ENCODE measurements at regions of chr17 and their contacts with region 1.

Region 1: GRCh38 chr17:76506408-76507349 is 5.5 kb upstream of the RHBDF2 start:
- DNase-seq: peak; percentile 71
- H3K4me3 ChIP-seq: no peak overlapping the region
- H3K27ac ChIP-seq: no peak overlapping the region
- H3K4me1 ChIP-seq: no peaks in the 10 kb centered on the region
- H3K27me3 ChIP-seq: peaks cover 0 to 4% of the 10 kb centered on the region in 2 experiments
- CTCF ChIP-seq: peak; percentile 87 to 95
- POLR2A ChIP-seq: no peak

Region 2: GRCh38 chr17:76296186-76296585 is 210.5 kb before region 1 on chr17:
- CTCF ChIA-PET with region 1: no interaction called
- POLR2A ChIA-PET with region 1: no interaction called
- dilution Hi-C with region 1: no loop called
- intact Hi-C with region 1: no loop called
- DNase-seq: no peak
- H3K4me3 ChIP-seq: no peak overlapping the region
- H3K27ac ChIP-seq: no peak overlapping the region
- H3K4me1 ChIP-seq: peaks cover 4% of the 10 kb centered on the region
- H3K27me3 ChIP-seq: no peaks in the 10 kb centered on the region
- CTCF ChIP-seq: no peak
- POLR2A ChIP-seq: no peak

Region 3: DNA sequence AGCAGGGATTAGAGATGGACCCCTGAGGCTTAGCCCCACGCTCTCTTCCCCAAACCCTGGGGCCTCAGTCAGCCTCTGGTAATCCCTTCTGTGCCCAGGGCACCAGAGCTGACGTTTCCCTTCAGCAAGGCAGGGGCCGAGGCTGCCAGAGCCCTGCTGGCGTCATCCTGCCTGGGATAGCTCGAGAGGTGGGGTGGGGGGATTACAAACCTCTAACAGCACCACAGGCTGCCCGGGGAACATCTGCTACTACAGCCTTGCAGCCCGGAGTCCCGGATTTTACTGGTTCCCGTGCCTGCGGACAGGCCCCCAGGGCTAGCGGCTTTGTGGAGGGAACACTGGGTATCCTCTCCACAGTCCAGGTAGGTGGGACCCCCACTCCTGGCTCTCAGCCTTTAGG is 39.3 kb before region 1 on chr17 and contains the start of gene AANAT:
- CTCF ChIA-PET with region 1: interaction called, 110 read pairs
- POLR2A ChIA-PET with region 1: interaction called, 6 read pairs
- dilution Hi-C with region 1: no loop called
- intact Hi-C with region 1: loop called (anchors 1 kb)
- DNase-seq: no peak
- H3K4me3 ChIP-seq: no peak within 1 kb of the TSS
- H3K27ac ChIP-seq: no peak within 1 kb of the TSS
- H3K4me1 ChIP-seq: no peaks in the 10 kb centered on the region
- H3K27me3 ChIP-seq: no peaks in the 10 kb centered on the region
- CTCF ChIP-seq: no peak
- POLR2A ChIP-seq: no peak
- total RNA-seq, gene AANAT: not detected in 2 replicates

Region 4: DNA sequence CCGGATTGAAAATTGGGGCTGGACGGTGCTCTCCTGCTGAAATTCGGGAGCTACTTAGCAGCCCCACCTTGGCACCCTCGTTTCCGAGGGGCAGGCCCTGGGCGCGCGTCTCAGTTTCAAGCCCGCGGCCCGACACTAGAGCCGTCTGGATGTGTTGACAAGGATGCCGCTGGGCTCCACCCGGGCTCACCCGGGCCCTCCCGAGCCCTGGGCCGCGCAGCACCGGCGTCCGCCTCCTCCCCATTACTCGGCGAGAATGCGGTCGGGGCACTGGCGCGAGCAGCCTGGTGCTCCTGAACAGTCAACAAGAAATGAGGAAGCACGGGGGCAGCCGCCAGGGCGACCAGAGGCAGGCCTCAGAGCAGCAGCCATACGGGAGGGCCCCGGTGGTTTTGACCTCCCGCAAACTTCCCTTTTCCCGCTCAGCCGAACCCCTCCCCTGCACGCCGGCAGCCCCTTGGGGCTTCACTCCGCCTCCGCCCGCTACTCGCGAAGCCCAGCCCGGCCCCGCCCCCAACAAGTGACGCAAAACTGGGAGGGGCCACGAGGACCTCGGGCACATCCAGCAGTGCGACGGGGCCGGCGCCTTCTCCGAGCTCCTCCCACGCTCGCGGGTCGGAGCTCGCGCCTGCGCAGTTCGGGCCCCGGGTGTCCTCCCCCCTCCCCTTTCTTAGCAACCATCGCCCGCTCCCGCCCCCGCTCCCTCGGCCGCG is 633.6 kb after region 1 on chr17:
- CTCF ChIA-PET with region 1: no interaction called
- POLR2A ChIA-PET with region 1: no interaction called
- dilution Hi-C with region 1: no loop called
- intact Hi-C with region 1: no loop called
- DNase-seq: peak; percentile 99
- H3K4me3 ChIP-seq: peak overlapping the region in 2 of 3 experiments; percentile 12 to 19
- H3K27ac ChIP-seq: peak overlapping the region; percentile 94
- H3K4me1 ChIP-seq: peaks cover 46% of the 10 kb centered on the region
- H3K27me3 ChIP-seq: no peaks in the 10 kb centered on the region
- CTCF ChIP-seq: peak in 1 of 2 donors; percentile 8
- POLR2A ChIP-seq: peak; percentile 87